PC-3 (cell line): ENCODE measurements at regions of chr2 and their contacts with region 1.

Region 1: GRCh38 chr2:12057436-12058166 is 311.2 kb downstream of the LPIN1 start:
- DNase-seq: no peak
- ATAC-seq: no peak
- H3K4me3 ChIP-seq: no peak overlapping the region
- H3K27ac ChIP-seq: no peak overlapping the region
- H3K4me1 ChIP-seq: peaks cover 18% of the 10 kb centered on the region
- H3K27me3 ChIP-seq: no peaks in the 10 kb centered on the region
- CTCF ChIP-seq: no peak

Region 2: GRCh38 chr2:11980809-11981208 is 76.8 kb before region 1 on chr2:
- CTCF ChIA-PET with region 1: no interaction called
- POLR2A ChIA-PET with region 1: no interaction called
- intact Hi-C with region 1: no loop called
- DNase-seq: no peak
- ATAC-seq: no peak
- H3K4me3 ChIP-seq: no peak overlapping the region
- H3K27ac ChIP-seq: no peak overlapping the region
- H3K4me1 ChIP-seq: peaks cover 2% of the 10 kb centered on the region; the same call in 1 of the 2 replicates
- H3K27me3 ChIP-seq: no peaks in the 10 kb centered on the region
- CTCF ChIP-seq: no peak

Region 3: DNA sequence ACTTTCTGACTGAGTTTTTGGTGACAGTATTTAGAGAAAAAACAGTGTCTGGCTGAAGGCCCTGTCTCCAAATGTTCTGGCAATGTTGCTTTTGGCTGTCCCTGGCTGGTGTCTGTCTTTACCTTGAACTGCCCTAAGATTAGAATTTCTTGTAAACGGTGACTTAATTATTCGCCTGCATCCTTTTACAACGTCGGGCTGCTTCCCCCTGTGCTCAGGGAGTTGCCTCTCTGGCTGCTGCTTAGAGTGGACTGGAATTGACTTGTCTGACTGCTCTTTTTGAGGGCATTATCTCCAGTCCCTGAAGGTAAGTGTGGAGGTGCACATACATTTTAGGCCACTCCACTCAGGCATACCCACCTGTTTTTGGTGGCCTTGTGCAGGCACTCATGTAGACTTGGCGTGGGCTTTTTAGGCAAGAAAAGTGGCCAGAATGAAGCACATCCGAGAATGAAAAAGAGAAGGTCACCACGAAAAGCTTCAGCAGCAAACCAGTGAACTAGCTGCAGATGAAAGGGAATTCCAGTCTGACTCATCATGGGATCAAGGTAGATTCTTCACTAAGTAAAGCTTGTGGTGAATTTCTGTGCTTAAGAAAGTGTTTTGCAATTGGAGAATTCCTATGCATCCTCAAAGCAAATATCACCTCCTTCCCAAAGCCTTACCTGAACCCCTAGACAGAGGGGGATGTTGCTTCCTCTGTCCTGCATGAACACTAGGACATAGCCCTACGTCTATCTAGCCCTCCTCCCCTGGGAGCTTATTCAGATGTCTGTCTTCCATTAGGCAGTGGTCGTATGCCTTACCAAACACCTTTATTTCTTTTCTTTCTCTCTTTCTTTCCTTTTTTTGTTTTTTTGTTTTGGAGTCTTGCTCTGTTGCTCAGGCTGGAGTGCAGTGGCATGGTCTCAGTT is 428.9 kb after region 1 on chr2:
- CTCF ChIA-PET with region 1: no interaction called
- POLR2A ChIA-PET with region 1: no interaction called
- intact Hi-C with region 1: loop called (anchors 10 kb)
- DNase-seq: peak; percentile 87
- ATAC-seq: peak; percentile 83
- H3K4me3 ChIP-seq: peak overlapping the region; percentile 17; the same call in 1 of the 2 replicates
- H3K27ac ChIP-seq: peak overlapping the region; percentile 47
- H3K4me1 ChIP-seq: peaks cover 31% of the 10 kb centered on the region
- H3K27me3 ChIP-seq: no peaks in the 10 kb centered on the region
- CTCF ChIP-seq: no peak